Endothelial cell of umbilical vein (primary cell): ENCODE measurements at regions of chr3 and their contacts with region 1.

Region 1: DNA sequence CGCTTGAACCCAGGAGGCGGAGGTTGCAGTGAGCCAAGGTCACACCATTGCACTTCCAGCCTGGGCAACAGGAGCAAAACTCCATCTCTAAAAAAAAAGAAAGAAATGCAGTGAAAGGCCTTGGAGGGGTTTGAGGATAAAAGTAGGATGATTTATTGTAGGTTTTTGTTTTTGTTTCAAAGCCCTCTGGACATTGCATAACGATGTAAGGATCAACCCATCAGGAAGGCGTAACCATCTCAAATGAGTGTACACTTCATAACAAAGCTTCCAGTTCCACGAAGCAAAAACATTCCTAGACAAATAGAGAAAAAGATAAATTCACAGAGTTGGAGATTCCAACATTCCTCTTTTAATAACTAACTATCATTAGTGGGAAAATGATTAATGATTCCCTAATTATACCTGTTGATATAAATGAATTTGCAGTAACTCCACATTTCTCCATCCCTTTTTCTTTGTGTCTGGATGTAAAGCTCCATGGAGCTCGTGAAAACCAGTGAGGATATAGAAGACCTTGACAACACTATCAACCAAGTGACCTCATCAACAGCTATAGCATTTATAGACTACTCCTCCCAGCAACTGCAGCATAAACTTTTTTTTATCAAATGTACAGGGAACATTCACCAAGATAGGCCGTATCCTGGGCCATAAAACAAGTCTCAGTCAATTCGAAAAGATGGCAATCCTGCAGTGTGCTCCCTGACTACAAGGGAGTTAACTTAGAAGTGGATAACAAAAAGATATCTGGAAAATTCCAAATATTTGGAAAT is 48.7 kb upstream of the PPP4R2 start:
- DNase-seq: no peak
- H3K4me3 ChIP-seq: no peak overlapping the region
- H3K27ac ChIP-seq: no peak overlapping the region
- H3K4me1 ChIP-seq: peaks cover 8% of the 10 kb centered on the region
- H3K27me3 ChIP-seq: no peaks in the 10 kb centered on the region
- CTCF ChIP-seq: no peak
- POLR2A ChIP-seq: no peak

Region 2: GRCh38 chr3:73056014-73056844 is 108.3 kb after region 1 on chr3:
- CTCF ChIA-PET with region 1: interaction called, 91 read pairs
- POLR2A ChIA-PET with region 1: no interaction called
- dilution Hi-C with region 1: no loop called
- intact Hi-C with region 1: no loop called
- DNase-seq: peak; percentile 46
- H3K4me3 ChIP-seq: no peak overlapping the region
- H3K27ac ChIP-seq: no peak overlapping the region
- H3K4me1 ChIP-seq: peaks cover 4% of the 10 kb centered on the region
- H3K27me3 ChIP-seq: no peaks in the 10 kb centered on the region
- CTCF ChIP-seq: peak in 1 of 2 donors; percentile 4
- POLR2A ChIP-seq: no peak